K562 (cell line): ENCODE measurements at regions of chr15 and their contacts with region 1.

Region 1: DNA sequence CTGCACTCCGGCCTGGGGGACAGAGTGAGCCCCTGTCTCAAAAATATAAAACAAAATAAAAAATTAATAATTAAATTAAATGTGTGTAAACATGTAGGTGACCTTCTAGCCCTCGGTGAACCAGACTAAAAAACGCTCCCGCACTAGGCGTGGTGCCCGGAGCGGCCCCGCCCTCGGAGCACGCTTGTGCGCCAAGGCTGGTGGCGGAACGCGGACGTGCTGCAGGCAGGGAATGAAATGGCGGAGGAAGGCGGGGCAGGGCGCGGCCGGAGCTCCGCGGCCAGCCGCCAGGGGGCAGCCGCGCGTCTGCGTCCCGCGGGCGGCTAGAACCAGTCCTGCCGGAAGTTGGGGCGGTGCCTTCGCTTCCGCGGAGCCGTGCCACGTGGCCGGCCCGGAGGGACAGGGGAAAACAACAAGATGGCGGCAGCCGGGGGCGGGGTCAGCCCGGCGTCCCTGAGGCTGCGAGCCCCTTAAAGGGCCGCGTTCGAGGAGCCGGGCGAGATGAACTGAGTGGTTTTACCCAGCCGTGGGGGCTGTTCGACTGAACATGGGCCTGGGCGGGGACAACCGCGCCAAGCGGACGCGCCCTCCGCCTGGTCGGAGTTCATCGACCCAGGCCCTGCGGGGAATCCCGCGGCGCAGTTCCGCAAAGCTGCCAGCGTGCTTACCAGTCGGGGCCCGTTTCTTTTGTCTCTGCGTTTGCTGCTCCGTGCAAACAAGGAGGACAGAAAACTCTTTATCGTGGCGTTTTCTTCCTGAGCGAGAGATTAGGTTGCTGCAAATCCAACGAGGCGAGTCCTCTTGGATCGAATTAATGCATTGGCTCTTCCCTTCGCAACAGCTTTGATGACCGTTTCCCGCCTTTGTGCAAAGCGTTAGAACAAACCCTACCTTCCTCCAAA is 90.9 kb upstream of the CHD2 start:
- DNase-seq: peak; percentile 95 to 98 (median 95)
- ATAC-seq: peak; percentile 83
- H3K4me3 ChIP-seq: peak overlapping the region; percentile 39
- H3K27ac ChIP-seq: peak overlapping the region; percentile 92
- H3K4me1 ChIP-seq: peaks cover 19 to 38% of the 10 kb centered on the region in 2 experiments
- H3K27me3 ChIP-seq: no peaks in the 10 kb centered on the region
- CTCF ChIP-seq: peak; percentile 91 to 97 (median 96)
- EP300 ChIP-seq: peak; percentile 72
- POLR2A ChIP-seq: peak; percentile 87
- RAD21 ChIP-seq: peak; percentile 94 to 96

Region 2: GRCh38 chr15:91032919-91033803 is 1776.1 kb before region 1 on chr15:
- CTCF ChIA-PET with region 1: no interaction called
- POLR2A ChIA-PET with region 1: no interaction called
- in situ Hi-C with region 1: no loop called
- intact Hi-C with region 1: loop called (anchors 10 kb)
- DNase-seq: peak; percentile 68 to 84 (median 74)
- ATAC-seq: peak; percentile 92
- H3K4me3 ChIP-seq: no peak overlapping the region
- H3K27ac ChIP-seq: no peak overlapping the region
- H3K4me1 ChIP-seq: peaks cover 0 to 22% of the 10 kb centered on the region in 2 experiments; a peak in 3 of 5 replicates
- H3K27me3 ChIP-seq: peaks cover 2 to 4% of the 10 kb centered on the region in 2 experiments; a peak in 3 of 5 replicates
- CTCF ChIP-seq: peak; percentile 85 to 90 (median 90)
- EP300 ChIP-seq: no peak
- POLR2A ChIP-seq: no peak
- RAD21 ChIP-seq: peak; percentile 68 to 90

Region 3: DNA sequence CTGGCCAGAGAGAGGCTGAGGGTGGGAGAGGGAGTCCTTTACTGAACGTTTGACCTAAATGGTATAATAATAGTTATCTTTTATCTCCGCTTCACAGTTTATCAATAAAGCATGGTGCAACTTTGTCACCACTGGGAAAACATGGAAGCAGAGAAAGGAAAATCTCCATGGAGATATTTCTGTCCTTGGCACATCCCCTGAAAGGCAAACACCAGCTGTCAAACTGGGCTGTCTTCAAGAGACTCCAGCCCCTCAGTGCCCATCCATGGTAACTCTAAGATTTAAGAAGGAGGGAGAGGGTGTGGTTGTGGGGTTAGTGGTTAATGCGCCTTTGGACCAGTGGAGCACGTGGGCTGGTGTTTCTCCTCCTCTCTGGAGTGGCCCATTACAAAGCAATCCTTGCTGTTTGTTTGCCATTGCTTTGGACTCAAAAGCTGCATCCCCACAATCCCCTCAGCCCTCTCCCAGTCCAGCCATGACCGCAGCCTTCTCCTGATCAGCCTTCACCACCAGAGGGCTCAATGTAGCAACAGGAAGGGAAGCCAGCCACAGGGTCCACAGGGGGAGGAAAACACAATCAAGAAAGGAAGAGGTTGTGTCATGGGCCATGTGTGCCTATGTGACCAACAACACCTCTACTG is 115.4 kb before region 1 on chr15:
- CTCF ChIA-PET with region 1: no interaction called
- POLR2A ChIA-PET with region 1: no interaction called
- in situ Hi-C with region 1: no loop called
- intact Hi-C with region 1: no loop called
- DNase-seq: peak; percentile 24 to 63 (median 46)
- ATAC-seq: peak; percentile 98
- H3K4me3 ChIP-seq: no peak overlapping the region
- H3K27ac ChIP-seq: no peak overlapping the region
- H3K4me1 ChIP-seq: no peaks in the 10 kb centered on the region
- H3K27me3 ChIP-seq: peaks cover 3 to 7% of the 10 kb centered on the region in 2 experiments; a peak in 3 of 5 replicates
- CTCF ChIP-seq: peak; percentile 61 to 77 (median 71)
- EP300 ChIP-seq: no peak
- POLR2A ChIP-seq: no peak
- RAD21 ChIP-seq: peak; percentile 20 to 65; a peak in 2 of 4 replicates

Region 4: DNA sequence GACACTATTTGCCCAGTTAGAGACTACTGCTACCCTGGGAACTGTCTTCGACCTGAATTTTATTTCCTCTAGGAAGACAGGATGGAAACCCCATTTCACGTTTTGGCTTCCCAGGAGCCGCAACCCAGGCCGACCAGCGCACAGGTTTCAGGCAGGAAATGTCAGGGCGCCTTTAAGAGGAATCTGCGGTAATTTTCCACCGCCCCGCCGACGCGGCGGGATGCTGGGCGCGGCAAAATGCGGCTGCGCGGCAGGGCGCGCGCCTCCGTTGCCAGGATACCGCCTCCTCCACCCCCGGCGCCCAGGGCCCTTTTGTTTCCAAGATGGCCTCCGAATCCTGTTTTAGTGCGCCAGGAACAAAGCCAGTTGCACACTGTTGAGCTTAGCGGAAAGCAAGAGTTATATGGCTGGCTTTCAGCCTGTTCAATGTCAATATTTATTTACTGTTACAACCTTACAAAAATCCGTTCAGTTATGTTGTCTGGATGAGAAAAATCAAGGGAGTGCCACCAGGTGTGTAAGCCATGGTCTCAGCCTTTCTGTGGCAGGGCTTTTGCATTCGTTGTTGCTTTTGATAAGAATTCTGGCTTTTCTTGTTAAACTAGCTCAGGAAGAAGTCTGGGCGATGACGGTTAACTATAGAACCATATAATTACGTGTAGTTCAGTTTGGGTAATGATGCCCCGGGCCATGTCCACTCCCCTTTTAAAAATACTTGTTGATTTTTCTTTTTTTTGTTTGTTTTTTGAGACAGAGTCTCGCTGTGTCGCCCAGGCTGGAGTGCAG is 11.2 kb after region 1 on chr15:
- CTCF ChIA-PET with region 1: no interaction called
- POLR2A ChIA-PET with region 1: interaction called, 52 read pairs
- in situ Hi-C with region 1: no loop called
- intact Hi-C with region 1: loop called (anchors 1 kb)
- DNase-seq: peak; percentile 92 to 96 (median 94)
- ATAC-seq: peak; percentile 85
- H3K4me3 ChIP-seq: peak overlapping the region; percentile 25
- H3K27ac ChIP-seq: peak overlapping the region; percentile 80
- H3K4me1 ChIP-seq: peaks cover 24 to 32% of the 10 kb centered on the region in 2 experiments
- H3K27me3 ChIP-seq: no peaks in the 10 kb centered on the region
- CTCF ChIP-seq: no peak
- EP300 ChIP-seq: no peak
- POLR2A ChIP-seq: peak; percentile 79
- RAD21 ChIP-seq: 0 out of 4 replicates have a peak, but pooled peaks of 1 of the 2 experiments have one; percentile 14

Region 5: GRCh38 chr15:92845126-92845508 is 35.9 kb after region 1 on chr15:
- CTCF ChIA-PET with region 1: no interaction called
- POLR2A ChIA-PET with region 1: interaction called, 5 read pairs
- in situ Hi-C with region 1: no loop called
- intact Hi-C with region 1: loop called (anchors 5 kb)
- DNase-seq: peak in 1 of 4 experiments; percentile 36
- ATAC-seq: no peak
- H3K4me3 ChIP-seq: no peak overlapping the region
- H3K27ac ChIP-seq: peak overlapping the region; percentile 37; the same call in 1 of the 3 replicates
- H3K4me1 ChIP-seq: peaks cover 8 to 23% of the 10 kb centered on the region in 2 experiments
- H3K27me3 ChIP-seq: no peaks in the 10 kb centered on the region
- CTCF ChIP-seq: no peak
- EP300 ChIP-seq: no peak
- POLR2A ChIP-seq: no peak
- RAD21 ChIP-seq: no peak

Region 6: GRCh38 chr15:92896561-92896960 is 87.3 kb after region 1 on chr15:
- CTCF ChIA-PET with region 1: no interaction called
- POLR2A ChIA-PET with region 1: interaction called, 109 read pairs
- in situ Hi-C with region 1: no loop called
- intact Hi-C with region 1: no loop called
- DNase-seq: no peak
- ATAC-seq: no peak
- H3K4me3 ChIP-seq: no peak overlapping the region
- H3K27ac ChIP-seq: no peak overlapping the region
- H3K4me1 ChIP-seq: no peaks in the 10 kb centered on the region
- H3K27me3 ChIP-seq: no peaks in the 10 kb centered on the region
- CTCF ChIP-seq: no peak
- EP300 ChIP-seq: no peak
- POLR2A ChIP-seq: no peak
- RAD21 ChIP-seq: no peak